Spleen (tissue), 13 donors: ENCODE measurements at regions of chr10 and their contacts with region 1.

Region 1: GRCh38 chr10:25016376-25017154 is at the start of gene THNSL1:
- DNase-seq: peak; percentile 98
- H3K4me3 ChIP-seq: peak within 1 kb of the TSS; percentile 71 to 91 (median 80)
- H3K27ac ChIP-seq: peak within 1 kb of the TSS; percentile 88 to 93 (median 90)
- H3K4me1 ChIP-seq: peaks cover 7 to 26% (median 18%) of the 10 kb centered on the region in 6 donors
- H3K27me3 ChIP-seq: no peaks in the 10 kb centered on the region
- CTCF ChIP-seq: no peak
- POLR2A ChIP-seq: peak in 2 of 3 donors; percentile 42 to 89
- total RNA-seq, gene THNSL1: 2.2 to 4.3 (median 2.8) TPM

Region 2: DNA sequence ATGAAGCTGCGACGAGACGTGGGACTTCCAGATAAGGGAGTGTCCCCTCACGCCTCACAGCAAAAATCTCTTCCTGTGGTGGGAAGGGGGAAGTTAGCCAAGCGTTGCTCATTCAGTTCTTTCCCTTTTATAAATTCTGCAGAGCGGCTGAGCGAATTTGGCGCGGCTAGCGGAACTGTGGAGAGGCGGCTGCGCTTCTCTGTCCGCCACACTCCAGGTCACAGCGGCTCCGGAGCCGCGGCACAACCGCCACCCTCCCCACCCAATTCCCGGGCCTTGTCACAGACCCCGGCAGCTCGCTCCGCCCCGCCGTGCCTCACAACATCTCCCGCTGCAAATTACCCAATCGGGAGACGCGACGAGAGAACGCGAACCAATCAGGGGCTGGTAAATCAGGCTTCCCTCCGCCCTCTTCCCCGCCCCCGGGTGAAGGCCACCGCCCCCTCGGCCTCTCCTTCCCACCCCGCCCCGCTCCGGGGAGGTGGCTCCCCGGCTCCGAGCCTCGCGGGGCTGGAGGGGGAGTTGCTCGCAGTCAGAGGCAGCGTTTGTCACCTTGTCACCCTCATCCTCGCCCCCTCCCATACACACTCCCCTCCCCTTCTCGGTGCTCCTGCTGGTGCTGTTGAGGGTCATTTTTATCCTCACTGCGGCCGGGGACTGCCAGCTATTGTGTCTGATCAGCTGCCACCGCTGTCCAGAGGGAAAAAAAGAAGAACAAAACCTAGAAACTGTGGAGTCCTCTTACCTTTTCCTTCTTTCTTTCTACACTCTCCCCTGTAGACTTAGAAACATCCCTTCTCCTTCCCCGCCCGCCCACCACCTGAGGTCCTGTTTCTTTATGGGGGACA is 292.0 kb before region 1 on chr10:
- intact Hi-C with region 1: loop called (anchors 10 kb)
- DNase-seq: peak; percentile 97
- H3K4me3 ChIP-seq: peak overlapping the region; percentile 68 to 90 (median 78)
- H3K27ac ChIP-seq: peak overlapping the region; percentile 39 to 94 (median 90)
- H3K4me1 ChIP-seq: peaks cover 16 to 45% (median 31%) of the 10 kb centered on the region in 6 donors
- H3K27me3 ChIP-seq: no peaks in the 10 kb centered on the region
- CTCF ChIP-seq: peak in 1 of 11 experiments; percentile 5
- POLR2A ChIP-seq: peak in 1 of 3 donors; percentile 90

Region 3: GRCh38 chr10:25080880-25081581 is 64.5 kb after region 1 on chr10:
- intact Hi-C with region 1: no loop called
- DNase-seq: no peak
- H3K4me3 ChIP-seq: no peak overlapping the region
- H3K27ac ChIP-seq: no peak overlapping the region
- H3K4me1 ChIP-seq: peaks cover 0 to 8% (median 2%) of the 10 kb centered on the region in 6 donors
- H3K27me3 ChIP-seq: peaks cover 0 to 2% (median 0%) of the 10 kb centered on the region in 7 donors
- CTCF ChIP-seq: peak; percentile 36 to 84 (median 75)
- POLR2A ChIP-seq: no peak

Region 4: GRCh38 chr10:25142116-25142864 is 125.7 kb after region 1 on chr10:
- intact Hi-C with region 1: no loop called
- DNase-seq: no peak
- H3K4me3 ChIP-seq: no peak overlapping the region
- H3K27ac ChIP-seq: no peak overlapping the region
- H3K4me1 ChIP-seq: no peaks in the 10 kb centered on the region
- H3K27me3 ChIP-seq: peaks cover 0 to 6% (median 0%) of the 10 kb centered on the region in 7 donors
- CTCF ChIP-seq: no peak
- POLR2A ChIP-seq: no peak

Region 5: GRCh38 chr10:25582961-25583360 is 566.4 kb after region 1 on chr10:
- intact Hi-C with region 1: no loop called
- DNase-seq: no peak
- H3K4me3 ChIP-seq: no peak overlapping the region
- H3K27ac ChIP-seq: no peak overlapping the region
- H3K4me1 ChIP-seq: no peaks in the 10 kb centered on the region
- H3K27me3 ChIP-seq: no peaks in the 10 kb centered on the region
- CTCF ChIP-seq: no peak
- POLR2A ChIP-seq: no peak